ENCODE measurements at regions of chr6 and their contacts with region 1.

Region 1: DNA sequence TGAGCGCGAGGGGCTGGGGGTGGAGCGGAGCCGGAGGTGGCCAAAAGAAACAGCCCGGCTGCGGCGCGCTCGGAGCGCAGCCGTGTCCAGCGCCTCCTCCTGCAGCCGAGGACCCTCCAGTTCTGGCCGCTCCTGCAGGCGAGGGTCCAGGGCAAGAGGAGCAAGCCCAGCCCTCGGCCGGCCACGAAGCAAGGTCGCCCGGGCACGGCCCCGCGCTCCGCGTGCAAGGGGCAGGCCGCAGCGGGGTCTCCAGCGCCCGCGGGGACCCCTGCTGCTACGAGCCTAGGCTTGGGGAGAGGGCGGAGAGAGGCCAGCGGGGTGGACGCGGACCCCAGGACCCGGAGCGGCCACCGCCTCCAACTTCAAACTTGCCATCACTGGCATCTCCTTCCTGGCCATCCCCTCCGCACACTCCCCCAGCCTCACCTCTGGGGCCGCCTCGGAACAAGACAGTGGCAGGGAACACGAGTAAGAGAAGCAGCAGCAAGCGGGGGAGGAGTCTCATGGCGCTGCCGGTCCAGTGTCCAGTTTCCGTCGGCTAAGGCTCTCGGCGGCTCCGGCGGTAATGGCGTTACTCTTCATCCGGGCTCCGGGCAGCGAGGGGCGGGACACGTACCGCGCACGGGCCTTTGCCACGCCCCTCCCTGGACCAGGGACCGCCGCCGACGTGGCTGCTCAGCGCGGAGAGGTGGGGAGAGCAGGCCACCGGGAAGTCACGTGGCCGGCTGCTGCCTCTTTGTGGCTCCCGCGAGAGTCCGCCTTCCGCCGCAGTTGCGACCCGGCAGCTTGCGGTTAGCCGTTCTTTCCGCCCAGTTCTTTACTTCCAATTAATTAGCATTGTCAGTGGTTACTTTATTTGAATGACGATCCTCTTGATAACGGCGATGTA is at the start of gene SSR1:
- DNase-seq: peak; percentile 95
- H3K4me3 Mint-ChIP-seq: peak within 1 kb of the TSS; percentile 100
- H3K27ac Mint-ChIP-seq: peak within 1 kb of the TSS; percentile 99
- H3K4me1 Mint-ChIP-seq: peaks cover 28% of the 10 kb centered on the region
- H3K27me3 Mint-ChIP-seq: no peaks in the 10 kb centered on the region
- total RNA-seq, gene SSR1: 196 and 203 TPM in 2 replicates

Region 2: GRCh38 chr6:7282097-7282906 is 30.6 kb before region 1 on chr6:
- intact Hi-C with region 1: no loop called
- DNase-seq: no peak
- H3K4me3 Mint-ChIP-seq: no peak overlapping the region
- H3K27ac Mint-ChIP-seq: peak overlapping the region; percentile 53
- H3K4me1 Mint-ChIP-seq: peaks cover 15% of the 10 kb centered on the region
- H3K27me3 Mint-ChIP-seq: no peaks in the 10 kb centered on the region

Region 3: GRCh38 chr6:7389451-7390225 is 76.8 kb after region 1 on chr6 and contains the starts of genes CAGE1 and RIOK1:
- intact Hi-C with region 1: loop called (anchors 1 kb)
- DNase-seq: peak; percentile 93
- H3K4me3 Mint-ChIP-seq: peak within 1 kb of the TSS; percentile 92
- H3K27ac Mint-ChIP-seq: peak within 1 kb of the TSS; percentile 99
- H3K4me1 Mint-ChIP-seq: peaks cover 27% of the 10 kb centered on the region
- H3K27me3 Mint-ChIP-seq: no peaks in the 10 kb centered on the region
- total RNA-seq, gene CAGE1: 0.16 TPM in 2 replicates
- total RNA-seq, gene RIOK1: 44.4 and 53.3 TPM in 2 replicates

Region 4: GRCh38 chr6:7424967-7425807 is 112.3 kb after region 1 on chr6:
- intact Hi-C with region 1: no loop called
- DNase-seq: no peak
- H3K4me3 Mint-ChIP-seq: no peak overlapping the region
- H3K27ac Mint-ChIP-seq: no peak overlapping the region
- H3K4me1 Mint-ChIP-seq: no peaks in the 10 kb centered on the region
- H3K27me3 Mint-ChIP-seq: no peaks in the 10 kb centered on the region

Region 5: DNA sequence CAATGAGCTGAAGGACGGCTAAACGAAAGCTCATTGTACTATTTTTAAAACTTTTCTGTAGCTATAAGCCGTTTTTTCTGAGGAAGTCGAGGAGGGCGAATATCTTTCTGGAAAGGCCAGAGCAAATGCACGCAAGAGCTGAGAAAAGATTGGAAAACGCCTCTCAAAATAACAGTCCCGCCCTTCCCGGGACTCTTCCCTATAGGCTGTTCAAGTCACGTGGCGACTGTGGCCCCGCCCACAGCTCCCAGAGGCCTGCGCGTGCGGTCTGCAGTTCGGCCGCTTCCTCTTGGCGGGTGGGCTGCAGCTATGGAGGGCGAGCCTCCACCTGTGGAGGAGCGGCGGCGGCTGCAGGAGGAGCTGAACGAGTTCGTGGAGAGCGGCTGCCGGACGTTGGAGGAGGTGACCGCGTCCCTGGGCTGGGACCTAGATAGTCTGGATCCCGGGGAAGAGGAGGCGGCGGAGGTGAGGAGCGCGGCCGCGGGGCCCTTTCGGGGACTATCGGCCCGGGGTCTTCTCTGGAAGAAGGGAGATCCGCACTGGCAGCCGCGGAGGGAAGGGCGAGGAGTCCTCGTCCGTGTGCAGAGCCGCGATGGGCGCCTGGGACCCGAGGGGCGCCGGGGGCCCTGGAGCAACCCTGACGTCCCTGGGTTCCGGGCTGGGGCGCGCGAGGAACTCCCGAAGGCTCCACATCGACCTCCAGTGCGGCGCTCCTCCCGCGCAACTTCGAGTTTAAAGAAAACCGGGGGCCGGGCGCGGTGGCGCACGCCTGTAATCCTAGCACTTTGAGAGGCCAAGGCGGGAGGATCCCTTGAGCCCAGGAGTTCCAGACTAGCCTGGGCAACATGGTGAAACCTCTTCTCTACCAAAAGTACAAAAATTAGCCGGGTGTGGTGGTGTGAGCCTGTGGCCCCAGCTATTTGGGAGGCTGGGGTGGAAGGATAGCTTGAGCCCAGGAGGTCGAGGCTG is 277.4 kb after region 1 on chr6 and contains the start of gene SNRNP48:
- intact Hi-C with region 1: loop called (anchors 1 kb)
- DNase-seq: peak; percentile 88
- H3K4me3 Mint-ChIP-seq: peak within 1 kb of the TSS; percentile 94
- H3K27ac Mint-ChIP-seq: peak within 1 kb of the TSS; percentile 92
- H3K4me1 Mint-ChIP-seq: peaks cover 28% of the 10 kb centered on the region
- H3K27me3 Mint-ChIP-seq: peaks cover 2% of the 10 kb centered on the region
- total RNA-seq, gene SNRNP48: 16.8 and 17.7 TPM in 2 replicates

Region 6: DNA sequence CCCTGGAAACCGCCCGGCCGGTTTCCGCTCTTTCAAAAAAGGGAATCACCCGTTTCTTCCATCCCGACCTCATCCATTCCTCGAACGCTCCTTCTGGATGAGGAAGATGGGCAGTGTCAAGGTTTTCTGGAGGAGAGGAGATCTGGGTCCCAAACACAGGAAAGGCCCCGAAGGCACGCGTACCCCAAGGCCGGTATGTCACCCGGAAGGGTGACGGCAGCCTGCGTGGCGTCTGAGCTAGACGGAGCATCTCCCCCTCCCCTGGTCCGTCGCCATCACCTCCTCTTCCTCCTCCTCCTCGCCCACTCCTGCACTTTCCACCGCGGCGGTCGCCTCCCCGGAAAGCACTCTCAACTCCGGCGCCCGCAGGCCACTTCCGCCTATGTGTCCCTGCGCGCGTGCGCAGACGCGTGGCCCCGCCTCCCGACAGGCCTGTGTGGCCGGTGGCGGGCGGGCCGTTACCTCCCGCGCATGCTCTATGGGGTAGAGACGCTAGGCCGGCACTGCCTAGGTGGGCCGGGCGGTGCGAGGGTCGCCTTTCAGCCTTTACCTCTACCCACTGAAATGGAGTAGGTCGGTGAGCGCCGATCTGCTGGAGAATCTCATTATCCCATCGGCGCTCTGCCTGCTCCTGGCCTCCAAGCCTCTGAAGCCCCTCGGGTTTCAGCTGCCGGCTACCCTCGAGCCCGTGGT is 1122.4 kb after region 1 on chr6 and contains the start of gene SLC35B3:
- intact Hi-C with region 1: loop called (anchors 5 kb)
- DNase-seq: peak; percentile 98
- H3K4me3 Mint-ChIP-seq: peak within 1 kb of the TSS; percentile 94
- H3K27ac Mint-ChIP-seq: peak within 1 kb of the TSS; percentile 98
- H3K4me1 Mint-ChIP-seq: peaks cover 29% of the 10 kb centered on the region
- H3K27me3 Mint-ChIP-seq: no peaks in the 10 kb centered on the region
- total RNA-seq, gene SLC35B3: 6.3 and 7.0 TPM in 2 replicates

Measured in activated T-helper 2 cell treated with anti-CD3 and anti-CD28 coated beads, Interferon-gamma antibody, Interleukin-2, Interleukin-4, amounts not matched to agents 10 μg/mL and 5 μg/mL and 100 μg/mL, durations not matched to agents 14 hours and 24 hours and 36 hours (primary cell).